Endothelial cell of umbilical vein (primary cell): ENCODE measurements at regions of chr11 and their contacts with region 1.

Region 1: DNA sequence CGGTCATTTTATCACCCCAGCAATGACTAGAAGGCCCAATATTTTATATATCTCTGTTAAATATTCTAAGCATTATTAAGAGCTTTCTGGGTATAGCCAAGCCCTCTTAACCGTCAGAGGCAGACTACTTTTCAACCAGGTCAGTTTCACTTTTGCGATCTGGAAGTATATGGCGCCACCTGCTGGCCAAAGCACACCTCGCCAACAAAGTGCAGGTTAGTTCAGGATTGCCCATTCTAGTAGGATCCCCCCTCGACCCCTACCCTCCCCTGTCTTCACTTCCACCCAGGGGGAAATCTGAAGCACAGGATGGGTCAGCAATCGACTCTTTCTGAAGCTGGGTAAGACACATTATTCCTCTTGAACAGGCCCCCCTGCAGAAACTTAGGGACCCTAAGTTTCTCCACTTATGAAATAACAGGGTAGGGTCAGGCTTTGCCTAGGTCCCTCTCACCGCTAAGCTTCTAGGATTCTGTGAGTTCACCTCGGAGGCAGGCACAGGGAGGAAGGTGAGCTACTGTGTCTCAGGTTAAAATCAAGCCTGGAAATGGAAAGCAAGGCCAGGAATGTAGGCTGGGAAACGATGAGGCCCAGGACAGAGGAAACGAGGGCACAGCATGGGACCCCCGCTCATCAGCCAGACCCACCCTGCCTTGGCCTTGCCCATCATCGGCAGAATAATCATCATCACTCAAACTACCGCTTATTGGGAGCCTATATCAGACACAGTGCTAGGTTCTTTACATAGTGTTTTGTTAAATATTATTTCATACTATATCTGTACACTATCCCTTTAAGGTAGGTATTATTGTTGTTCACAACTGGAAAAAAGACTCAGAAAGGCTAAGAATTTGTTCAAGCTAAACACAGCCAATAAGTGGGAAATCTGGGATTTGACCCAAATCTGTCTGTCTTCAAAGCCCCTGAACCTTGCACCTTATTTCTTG is 35.6 kb downstream of the KCNJ1 start:
- DNase-seq: peak; percentile 87
- H3K4me3 ChIP-seq: no peak overlapping the region
- H3K27ac ChIP-seq: peak overlapping the region; percentile 47
- H3K4me1 ChIP-seq: peaks cover 65% of the 10 kb centered on the region
- H3K27me3 ChIP-seq: no peaks in the 10 kb centered on the region
- CTCF ChIP-seq: peak; percentile 81 to 84
- POLR2A ChIP-seq: no peak

Region 2: GRCh38 chr11:128157423-128158298 is 673.8 kb before region 1 on chr11:
- CTCF ChIA-PET with region 1: interaction called, 20 read pairs
- POLR2A ChIA-PET with region 1: no interaction called
- dilution Hi-C with region 1: no loop called
- intact Hi-C with region 1: loop called (anchors 1 kb)
- DNase-seq: peak; percentile 87
- H3K4me3 ChIP-seq: peak overlapping the region in 1 of 3 experiments; percentile 48
- H3K27ac ChIP-seq: peak overlapping the region; percentile 75
- H3K4me1 ChIP-seq: peaks cover 16% of the 10 kb centered on the region
- H3K27me3 ChIP-seq: no peaks in the 10 kb centered on the region
- CTCF ChIP-seq: peak; percentile 66 to 86
- POLR2A ChIP-seq: no peak

Region 3: DNA sequence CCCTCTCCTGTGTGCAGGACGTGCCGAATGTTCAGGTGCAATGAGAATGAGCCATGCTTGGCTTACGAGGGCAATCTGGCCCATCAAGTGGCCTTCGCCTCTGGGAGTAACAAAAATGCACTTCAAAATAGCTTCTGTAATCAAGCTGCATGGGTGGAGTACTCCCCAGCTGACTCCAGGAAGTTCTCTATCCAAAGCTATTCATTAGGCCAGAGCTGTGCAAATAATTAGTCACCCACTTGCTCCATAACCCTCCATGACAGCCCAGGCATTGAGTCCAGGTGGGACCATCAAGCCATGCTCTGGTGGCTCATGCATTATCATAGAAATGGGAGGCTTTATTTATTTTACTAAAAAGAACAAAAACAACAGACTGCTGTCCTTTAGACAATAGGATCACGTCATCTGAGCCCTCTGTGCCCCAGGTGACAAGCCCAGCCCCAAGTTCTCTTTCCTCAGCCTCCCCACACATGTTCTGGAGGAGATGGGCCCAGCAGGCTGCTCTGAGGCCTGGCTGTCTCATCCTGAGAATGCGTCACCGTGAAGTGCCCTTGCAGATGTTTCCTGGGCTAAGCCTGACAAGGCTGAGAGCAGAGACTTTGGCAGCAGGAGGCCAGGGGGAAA is 488.8 kb before region 1 on chr11:
- CTCF ChIA-PET with region 1: interaction called, 3 read pairs
- POLR2A ChIA-PET with region 1: no interaction called
- dilution Hi-C with region 1: no loop called
- intact Hi-C with region 1: loop called (anchors 2 kb)
- DNase-seq: peak; percentile 98
- H3K4me3 ChIP-seq: no peak overlapping the region
- H3K27ac ChIP-seq: peak overlapping the region; percentile 83
- H3K4me1 ChIP-seq: peaks cover 31% of the 10 kb centered on the region
- H3K27me3 ChIP-seq: no peaks in the 10 kb centered on the region
- CTCF ChIP-seq: no peak
- POLR2A ChIP-seq: peak; percentile 47

Region 4: GRCh38 chr11:128709402-128709801 is 122.0 kb before region 1 on chr11:
- CTCF ChIA-PET with region 1: interaction called, 4 read pairs
- POLR2A ChIA-PET with region 1: no interaction called
- dilution Hi-C with region 1: no loop called
- intact Hi-C with region 1: loop called (anchors 1 kb)
- DNase-seq: peak; percentile 99
- H3K4me3 ChIP-seq: no peak overlapping the region
- H3K27ac ChIP-seq: peak overlapping the region; percentile 97
- H3K4me1 ChIP-seq: peaks cover 88% of the 10 kb centered on the region
- H3K27me3 ChIP-seq: no peaks in the 10 kb centered on the region
- CTCF ChIP-seq: peak in 1 of 2 donors; percentile 5
- POLR2A ChIP-seq: peak; percentile 85

Region 5: GRCh38 chr11:128796270-128796669 is 35.2 kb before region 1 on chr11:
- CTCF ChIA-PET with region 1: interaction called, 11 read pairs
- POLR2A ChIA-PET with region 1: no interaction called
- dilution Hi-C with region 1: no loop called
- intact Hi-C with region 1: no loop called
- DNase-seq: no peak
- H3K4me3 ChIP-seq: no peak overlapping the region
- H3K27ac ChIP-seq: no peak overlapping the region
- H3K4me1 ChIP-seq: no peaks in the 10 kb centered on the region
- H3K27me3 ChIP-seq: no peaks in the 10 kb centered on the region
- CTCF ChIP-seq: no peak
- POLR2A ChIP-seq: no peak

Region 6: GRCh38 chr11:128848815-128849455 is 17.5 kb after region 1 on chr11:
- CTCF ChIA-PET with region 1: interaction called, 18 read pairs
- POLR2A ChIA-PET with region 1: no interaction called
- dilution Hi-C with region 1: no loop called
- intact Hi-C with region 1: loop called (anchors 1 kb)
- DNase-seq: peak; percentile 72
- H3K4me3 ChIP-seq: no peak overlapping the region
- H3K27ac ChIP-seq: no peak overlapping the region
- H3K4me1 ChIP-seq: peaks cover 4% of the 10 kb centered on the region
- H3K27me3 ChIP-seq: no peaks in the 10 kb centered on the region
- CTCF ChIP-seq: peak; percentile 94 to 97
- POLR2A ChIP-seq: no peak

Region 7: GRCh38 chr11:128884703-128885338 is 53.4 kb after region 1 on chr11:
- CTCF ChIA-PET with region 1: no interaction called
- POLR2A ChIA-PET with region 1: no interaction called
- dilution Hi-C with region 1: no loop called
- intact Hi-C with region 1: no loop called
- DNase-seq: peak; percentile 80
- H3K4me3 ChIP-seq: no peak overlapping the region
- H3K27ac ChIP-seq: no peak overlapping the region
- H3K4me1 ChIP-seq: no peaks in the 10 kb centered on the region
- H3K27me3 ChIP-seq: peaks cover 43 to 62% of the 10 kb centered on the region in 2 experiments
- CTCF ChIP-seq: peak; percentile 59 to 63
- POLR2A ChIP-seq: no peak